Heart right ventricle (tissue), 16 donors: ENCODE measurements at regions of chr5 and their contacts with region 1.

Region 1: GRCh38 chr5:19322716-19323485 is 665.1 kb downstream of the CDH18 start:
- DNase-seq: no peak
- ATAC-seq: no peak
- H3K4me3 ChIP-seq: no peak overlapping the region
- H3K27ac ChIP-seq: no peak overlapping the region
- H3K4me1 ChIP-seq: no peaks in the 10 kb centered on the region
- H3K27me3 ChIP-seq: no peaks in the 10 kb centered on the region
- CTCF ChIP-seq: no peak

Region 2: DNA sequence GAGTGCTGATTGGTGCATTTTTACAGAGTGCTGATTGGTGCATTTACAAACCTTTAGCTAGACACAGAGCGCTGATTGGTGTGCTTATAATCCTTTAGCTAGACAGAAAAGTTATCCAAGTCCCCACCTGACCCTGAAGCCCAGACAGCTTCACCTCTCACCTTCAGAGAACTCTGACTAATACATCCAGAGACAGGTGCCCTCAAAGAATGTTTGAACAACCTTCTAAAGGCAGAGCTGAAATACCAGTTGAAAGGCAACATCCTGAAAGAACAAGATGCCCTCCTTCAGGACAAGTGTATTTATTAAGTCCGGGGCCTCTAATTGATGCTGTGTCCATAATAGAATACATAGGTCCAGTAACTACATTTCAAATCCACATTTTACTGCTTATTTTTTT is 15.3 kb before region 1 on chr5:
- intact Hi-C with region 1: loop called in 1 of 10 experiments (anchors 1 kb)
- DNase-seq: no peak
- ATAC-seq: no peak
- H3K4me3 ChIP-seq: no peak overlapping the region
- H3K27ac ChIP-seq: no peak overlapping the region
- H3K4me1 ChIP-seq: no peaks in the 10 kb centered on the region
- H3K27me3 ChIP-seq: no peaks in the 10 kb centered on the region
- CTCF ChIP-seq: no peak

Region 3: DNA sequence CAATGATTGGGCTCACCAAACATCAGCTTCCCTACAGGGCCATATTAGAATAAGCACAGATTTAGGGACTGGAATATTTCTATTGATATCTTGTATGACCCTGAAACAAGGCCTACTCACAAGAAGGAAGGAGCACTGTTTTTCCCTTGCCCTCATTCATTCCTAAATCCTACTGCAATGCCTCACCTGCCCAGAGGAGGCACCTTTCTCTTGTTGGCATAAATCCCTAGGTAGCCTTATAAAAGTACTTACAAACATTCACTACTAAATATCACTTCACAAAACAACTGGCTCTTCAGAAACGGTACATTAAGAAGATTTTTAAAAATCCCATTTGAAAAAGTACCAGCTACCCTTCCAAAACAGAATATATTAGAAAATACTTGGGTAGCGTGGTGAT is 215.7 kb after region 1 on chr5:
- intact Hi-C with region 1: no loop called
- DNase-seq: no peak
- ATAC-seq: no peak
- H3K4me3 ChIP-seq: no peak overlapping the region
- H3K27ac ChIP-seq: no peak overlapping the region
- H3K4me1 ChIP-seq: no peaks in the 10 kb centered on the region
- H3K27me3 ChIP-seq: no peaks in the 10 kb centered on the region
- CTCF ChIP-seq: no peak